ENCODE measurements at regions of chr10 and their contacts with region 1.

Region 1: DNA sequence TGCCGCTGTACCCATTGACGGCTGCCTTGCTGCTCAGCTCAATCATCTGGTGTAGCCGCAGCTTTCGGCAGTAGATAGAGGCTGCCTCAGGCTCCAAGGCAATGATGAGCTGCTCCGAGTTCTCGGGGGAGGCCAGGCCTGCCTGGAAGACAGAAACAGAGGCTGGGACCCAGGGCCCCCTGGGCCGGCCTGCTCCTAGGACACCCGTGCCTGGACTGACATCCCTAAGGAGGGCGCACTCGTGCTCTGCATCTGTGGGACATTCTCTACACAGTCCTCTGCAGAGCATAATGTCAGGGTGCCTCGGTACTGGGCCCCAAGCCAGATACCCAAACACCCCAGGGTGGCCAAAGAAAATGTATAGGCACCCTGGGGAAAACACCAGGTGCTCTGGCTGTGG is 58.5 kb downstream of the HSPA12A start:
- DNase-seq: no peak
- H3K4me3 ChIP-seq: no peak overlapping the region
- H3K27ac ChIP-seq: peak overlapping the region in 1 of 59 donors; percentile 2
- H3K27me3 ChIP-seq: no peaks in the 10 kb centered on the region
- CTCF ChIP-seq: no peak

Region 2: DNA sequence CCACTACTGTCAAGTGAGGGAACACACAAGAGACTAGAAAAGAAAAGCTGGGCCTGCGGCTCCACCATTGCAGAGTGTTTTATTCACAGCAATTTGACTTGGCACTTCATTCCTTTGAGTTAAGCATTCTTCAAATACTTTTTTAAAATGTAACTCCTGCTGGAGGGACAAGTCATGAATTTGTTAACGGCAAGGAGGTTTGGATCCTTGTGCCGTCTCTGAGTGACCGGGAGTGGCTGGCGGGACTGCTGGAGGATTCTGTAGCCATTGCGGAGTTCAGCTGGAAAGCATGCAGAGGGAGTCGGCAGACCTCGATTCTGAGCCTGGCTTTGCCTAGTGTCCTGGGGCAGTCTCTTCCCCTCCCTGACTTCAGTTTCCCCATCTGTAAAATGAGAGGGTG is 48.8 kb after region 1 on chr10:
- intact Hi-C with region 1: no loop called
- DNase-seq: no peak
- H3K4me3 ChIP-seq: no peak overlapping the region
- H3K27ac ChIP-seq: no peak overlapping the region
- H3K27me3 ChIP-seq: no peaks in the 10 kb centered on the region
- CTCF ChIP-seq: no peak

Region 3: DNA sequence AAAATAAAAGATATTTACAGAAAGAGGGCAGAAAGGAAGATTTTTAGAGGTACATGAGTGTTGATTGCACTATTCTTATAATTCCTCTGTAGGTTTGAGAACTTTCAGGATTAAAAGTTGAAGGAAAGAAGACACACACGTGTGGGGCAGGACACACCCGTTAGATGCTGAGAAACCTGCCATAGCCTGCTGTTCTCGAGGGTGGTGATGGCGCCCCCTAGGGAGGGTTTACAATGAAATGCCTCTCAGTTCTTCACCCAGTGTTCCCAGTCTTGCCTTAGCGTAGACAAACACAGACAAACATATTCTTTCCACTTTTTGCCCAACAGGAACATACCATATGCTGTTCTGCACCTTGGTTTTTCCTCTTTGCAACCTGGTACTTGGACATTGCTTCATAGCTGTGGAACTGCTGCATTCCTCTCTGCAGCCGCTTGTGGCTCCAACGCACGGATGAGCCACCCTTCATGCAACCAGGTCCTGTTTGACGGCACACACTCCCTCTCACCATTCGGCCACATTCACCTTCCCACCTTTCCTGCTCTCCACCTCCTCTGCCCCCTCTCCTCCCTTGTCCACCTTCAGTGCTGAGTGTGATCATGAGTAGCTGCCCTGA is 81.8 kb after region 1 on chr10:
- intact Hi-C with region 1: loop called in 1 of 2 experiments (anchors 5 kb)
- DNase-seq: peak in 6 of 10 donors; percentile 51 to 74 (median 60)
- H3K4me3 ChIP-seq: no peak overlapping the region
- H3K27ac ChIP-seq: no peak overlapping the region
- H3K27me3 ChIP-seq: no peaks in the 10 kb centered on the region
- CTCF ChIP-seq: peak in 54 of 56 donors; percentile 18 to 74 (median 56)

Region 4: GRCh38 chr10:116787893-116788665 is 104.3 kb after region 1 on chr10:
- intact Hi-C with region 1: loop called (anchors 2 kb)
- DNase-seq: peak; percentile 67 to 89 (median 84)
- H3K4me3 ChIP-seq: peak overlapping the region; percentile 13 to 69 (median 48)
- H3K27ac ChIP-seq: peak overlapping the region in 9 of 59 donors; percentile 1 to 66 (median 35)
- H3K27me3 ChIP-seq: no peaks in the 10 kb centered on the region
- CTCF ChIP-seq: peak; percentile 94 to 100 (median 100)